ENCODE measurements at regions of chr7 and their contacts with region 1.

Region 1: GRCh38 chr7:79868010-79868409 is 266.6 kb upstream of the GNAI1 start:
- DNase-seq: peak; percentile 12
- ATAC-seq: peak; percentile 53
- H3K4me3 ChIP-seq: no peak overlapping the region
- H3K27ac ChIP-seq: no peak overlapping the region
- H3K4me1 ChIP-seq: 0 out of 2 replicates have a peak, but pooled peaks cover 2% of the 10 kb centered on the region
- H3K27me3 ChIP-seq: no peaks in the 10 kb centered on the region
- CTCF ChIP-seq: no peak
- POLR2A ChIP-seq: no peak
- RAD21 ChIP-seq: no peak

Region 2: DNA sequence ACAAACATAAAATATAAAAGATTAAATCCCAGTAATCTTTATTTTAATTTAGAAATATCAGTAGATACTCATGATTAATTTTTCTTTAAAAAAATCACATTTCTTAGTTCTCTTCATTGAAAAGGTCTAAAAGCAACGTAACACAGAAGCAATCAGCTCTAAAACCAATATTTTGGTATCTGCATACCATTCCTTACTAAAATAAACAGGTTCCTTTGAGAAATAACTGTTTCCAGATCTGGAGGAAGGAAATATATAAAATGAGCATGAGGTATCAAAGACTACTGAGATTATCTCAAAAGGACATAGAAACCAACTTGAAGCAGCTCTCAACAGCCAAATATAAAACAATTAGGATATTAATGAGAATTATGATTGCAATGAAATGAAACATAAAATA is 34.4 kb before region 1 on chr7:
- CTCF ChIA-PET with region 1: no interaction called
- POLR2A ChIA-PET with region 1: no interaction called
- dilution Hi-C with region 1: no loop called
- in situ Hi-C with region 1: no loop called
- intact Hi-C with region 1: loop called (anchors 5 kb)
- DNase-seq: peak; percentile 58
- ATAC-seq: 0 out of 2 replicates have a peak, but pooled peaks have one; percentile 42
- H3K4me3 ChIP-seq: no peak overlapping the region
- H3K27ac ChIP-seq: no peak overlapping the region
- H3K4me1 ChIP-seq: no peaks in the 10 kb centered on the region
- H3K27me3 ChIP-seq: no peaks in the 10 kb centered on the region
- CTCF ChIP-seq: no peak
- POLR2A ChIP-seq: no peak
- RAD21 ChIP-seq: no peak

Region 3: DNA sequence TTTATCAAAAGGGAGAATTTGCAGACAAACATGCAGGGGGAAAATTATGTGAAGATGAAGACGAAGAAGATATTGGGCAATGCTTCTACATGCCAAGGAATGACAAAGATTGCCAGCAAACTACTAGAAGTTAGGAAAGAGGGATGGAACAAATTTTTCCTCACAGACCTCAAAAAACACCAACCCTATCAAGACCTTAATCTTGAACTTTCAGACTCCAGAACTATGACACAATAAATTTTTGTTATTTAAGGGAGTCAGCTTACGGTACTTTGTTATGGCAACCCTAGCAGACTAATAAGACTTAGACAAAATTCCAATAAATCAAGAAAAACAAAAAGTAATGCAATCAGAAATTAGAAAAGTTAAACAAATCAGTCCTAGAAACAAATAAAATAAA is 13.4 kb before region 1 on chr7:
- CTCF ChIA-PET with region 1: no interaction called
- POLR2A ChIA-PET with region 1: no interaction called
- dilution Hi-C with region 1: no loop called
- in situ Hi-C with region 1: no loop called
- intact Hi-C with region 1: no loop called
- DNase-seq: no peak
- ATAC-seq: no peak
- H3K4me3 ChIP-seq: no peak overlapping the region
- H3K27ac ChIP-seq: no peak overlapping the region
- H3K4me1 ChIP-seq: peaks cover 2% of the 10 kb centered on the region; the same call in 1 of the 2 replicates
- H3K27me3 ChIP-seq: no peaks in the 10 kb centered on the region
- CTCF ChIP-seq: no peak
- POLR2A ChIP-seq: no peak
- RAD21 ChIP-seq: no peak

Region 4: GRCh38 chr7:79880312-79880711 is 12.3 kb after region 1 on chr7:
- CTCF ChIA-PET with region 1: no interaction called
- POLR2A ChIA-PET with region 1: no interaction called
- dilution Hi-C with region 1: no loop called
- in situ Hi-C with region 1: no loop called
- intact Hi-C with region 1: no loop called
- DNase-seq: no peak
- ATAC-seq: no peak
- H3K4me3 ChIP-seq: no peak overlapping the region
- H3K27ac ChIP-seq: no peak overlapping the region
- H3K4me1 ChIP-seq: peaks cover 5% of the 10 kb centered on the region
- H3K27me3 ChIP-seq: no peaks in the 10 kb centered on the region
- CTCF ChIP-seq: no peak
- POLR2A ChIP-seq: no peak
- RAD21 ChIP-seq: no peak

Region 5: DNA sequence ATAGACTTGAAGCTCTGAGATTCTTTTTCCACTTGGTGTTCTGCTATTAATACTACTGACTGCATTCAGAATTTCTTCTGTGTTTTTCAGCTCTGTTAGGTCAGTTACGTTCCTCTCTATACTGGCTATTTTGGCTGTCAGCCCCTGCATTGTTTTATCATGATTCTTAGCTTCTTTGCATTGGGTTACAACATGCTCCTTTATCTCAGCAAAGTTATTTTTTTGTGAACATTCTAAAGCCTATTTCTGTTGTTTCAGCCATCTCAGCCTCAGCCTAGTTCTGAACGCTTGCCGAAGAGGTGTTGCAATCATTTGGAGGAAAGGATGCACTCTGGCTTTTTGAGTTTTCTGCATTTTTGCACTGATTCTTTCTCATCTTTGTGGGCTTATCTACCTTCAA is 65.1 kb after region 1 on chr7:
- CTCF ChIA-PET with region 1: no interaction called
- POLR2A ChIA-PET with region 1: interaction called, 14 read pairs
- dilution Hi-C with region 1: no loop called
- in situ Hi-C with region 1: no loop called
- intact Hi-C with region 1: no loop called
- DNase-seq: peak; percentile 89
- ATAC-seq: peak; percentile 94
- H3K4me3 ChIP-seq: no peak overlapping the region
- H3K27ac ChIP-seq: no peak overlapping the region
- H3K4me1 ChIP-seq: peaks cover 3% of the 10 kb centered on the region
- H3K27me3 ChIP-seq: no peaks in the 10 kb centered on the region
- CTCF ChIP-seq: no peak
- POLR2A ChIP-seq: no peak
- RAD21 ChIP-seq: no peak

Measured in IMR-90 (cell line).